Mammary epithelial cell (primary cell): ENCODE measurements at regions of chr7 and their contacts with region 1.

Region 1: DNA sequence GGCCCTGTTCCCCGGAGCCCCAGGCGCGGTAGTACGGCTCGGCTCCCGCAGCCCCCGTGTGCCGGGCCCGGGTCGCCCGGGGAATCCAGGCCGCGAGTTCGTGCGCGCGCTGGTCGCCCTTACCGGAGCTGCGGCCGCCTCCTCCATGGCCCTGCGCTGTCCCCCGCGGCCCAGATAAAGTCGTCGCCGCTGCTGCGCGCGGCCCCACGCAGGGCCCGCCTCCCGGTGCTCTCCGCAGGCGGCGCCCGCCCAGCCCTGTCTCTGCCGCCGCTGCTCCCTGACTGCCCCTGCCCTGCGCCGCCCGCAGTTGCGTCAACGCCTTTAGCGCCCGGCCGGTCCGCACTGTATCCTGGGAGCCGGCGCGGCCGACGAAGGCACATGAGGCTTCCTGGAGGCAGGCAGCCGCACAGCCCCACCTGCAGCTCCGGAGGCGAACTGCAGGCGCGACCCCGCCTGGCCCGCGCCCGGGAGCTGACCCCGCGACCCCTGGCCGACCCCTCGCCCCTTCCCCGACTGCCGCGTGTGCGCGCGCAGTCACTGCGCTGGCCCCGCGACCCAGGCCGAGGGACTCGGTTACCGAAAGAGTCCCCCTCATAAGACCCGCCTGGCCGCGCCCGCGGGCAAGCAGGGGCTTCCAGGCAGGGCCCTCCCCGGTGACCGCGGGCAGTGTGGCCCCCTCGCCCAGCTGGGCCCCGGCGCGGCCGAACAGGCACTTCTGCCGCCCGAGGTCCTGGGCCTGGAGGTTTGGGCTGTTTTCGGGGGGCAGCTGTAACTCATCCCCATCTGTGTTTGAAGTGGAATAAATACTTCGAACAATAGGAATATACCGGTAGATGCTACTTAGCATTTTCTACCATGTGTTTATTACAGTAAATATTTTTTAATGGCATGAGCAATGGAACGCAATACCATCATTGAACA is 127.1 kb upstream of the ZNF746 start:
- DNase-seq: peak; percentile 92
- H3K4me3 ChIP-seq: peak overlapping the region; percentile 63 to 78 (median 69)
- H3K27ac ChIP-seq: peak overlapping the region; percentile 45
- H3K4me1 ChIP-seq: peaks cover 19% of the 10 kb centered on the region
- H3K27me3 ChIP-seq: no peaks in the 10 kb centered on the region
- CTCF ChIP-seq: peak; percentile 58 to 83

Region 2: GRCh38 chr7:149310113-149310836 is 314.4 kb before region 1 on chr7:
- CTCF ChIA-PET with region 1: interaction called, 4 read pairs
- dilution Hi-C with region 1: no loop called
- in situ Hi-C with region 1: no loop called
- intact Hi-C with region 1: loop called (anchors 2 kb)
- DNase-seq: peak; percentile 85
- H3K4me3 ChIP-seq: no peak overlapping the region
- H3K27ac ChIP-seq: no peak overlapping the region
- H3K4me1 ChIP-seq: no peaks in the 10 kb centered on the region
- H3K27me3 ChIP-seq: no peaks in the 10 kb centered on the region
- CTCF ChIP-seq: peak; percentile 63 to 71

Region 3: GRCh38 chr7:149497456-149498261 is 127.0 kb before region 1 on chr7 and contains the start of gene ZNF746:
- CTCF ChIA-PET with region 1: no interaction called
- dilution Hi-C with region 1: no loop called
- in situ Hi-C with region 1: no loop called
- intact Hi-C with region 1: loop called (anchors 10 kb)
- DNase-seq: peak; percentile 77
- H3K4me3 ChIP-seq: peak within 1 kb of the TSS; percentile 58 to 97 (median 88)
- H3K27ac ChIP-seq: peak within 1 kb of the TSS; percentile 58
- H3K4me1 ChIP-seq: peaks cover 11% of the 10 kb centered on the region
- H3K27me3 ChIP-seq: no peaks in the 10 kb centered on the region
- CTCF ChIP-seq: peak; percentile 22 to 67
- total RNA-seq, gene ZNF746: 22.1 to 34.3 TPM

Region 4: DNA sequence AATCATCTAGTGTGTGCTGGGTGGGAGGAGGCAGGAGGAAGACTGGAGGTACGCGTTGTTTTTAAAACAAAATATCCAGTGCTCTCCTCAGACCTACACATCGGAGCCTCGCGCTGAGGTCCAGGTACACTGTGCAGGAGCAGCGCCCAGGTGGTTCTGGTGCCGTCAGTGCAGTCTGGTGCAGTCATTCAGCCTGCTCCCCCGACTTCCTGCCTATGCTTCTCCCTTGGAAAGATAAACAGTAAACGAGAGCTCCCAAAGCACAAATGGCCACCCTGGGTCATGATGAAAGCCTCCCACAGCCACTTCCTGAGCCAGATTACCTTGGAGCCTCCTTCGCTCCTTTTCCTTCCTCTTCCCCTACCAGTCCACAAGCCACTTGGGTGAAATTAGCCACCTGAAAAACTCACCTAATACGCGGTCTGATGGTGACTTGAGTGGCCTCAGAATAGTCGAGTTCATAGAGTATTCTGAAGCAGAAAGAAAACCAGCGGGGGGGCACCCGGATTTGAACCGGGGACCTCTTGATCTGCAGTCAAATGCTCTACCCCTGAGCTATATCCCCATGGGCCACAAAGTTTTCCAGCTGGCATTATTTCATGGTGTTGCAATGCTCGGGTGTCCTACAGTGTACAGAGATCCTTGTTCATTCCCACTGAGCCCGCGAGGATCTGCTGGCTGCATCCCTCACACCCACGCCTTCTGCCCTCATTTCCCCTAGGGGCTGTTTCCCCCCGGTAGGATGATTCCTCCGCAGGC is 66.2 kb after region 1 on chr7:
- CTCF ChIA-PET with region 1: no interaction called
- dilution Hi-C with region 1: no loop called
- in situ Hi-C with region 1: no loop called
- intact Hi-C with region 1: loop called (anchors 5 kb)
- DNase-seq: peak; percentile 96
- H3K4me3 ChIP-seq: peak overlapping the region in 1 of 3 experiments; percentile 42
- H3K27ac ChIP-seq: no peak overlapping the region
- H3K4me1 ChIP-seq: no peaks in the 10 kb centered on the region
- H3K27me3 ChIP-seq: peaks cover 2% of the 10 kb centered on the region
- CTCF ChIP-seq: no peak

Region 5: GRCh38 chr7:149742075-149742701 is 117.5 kb after region 1 on chr7:
- CTCF ChIA-PET with region 1: no interaction called
- dilution Hi-C with region 1: no loop called
- in situ Hi-C with region 1: no loop called
- intact Hi-C with region 1: loop called (anchors 1 kb)
- DNase-seq: peak; percentile 33
- H3K4me3 ChIP-seq: peak overlapping the region; percentile 2 to 12 (median 8)
- H3K27ac ChIP-seq: no peak overlapping the region
- H3K4me1 ChIP-seq: peaks cover 2% of the 10 kb centered on the region
- H3K27me3 ChIP-seq: no peaks in the 10 kb centered on the region
- CTCF ChIP-seq: peak; percentile 86 to 93